ENCODE measurements at regions of chr12 and their contacts with region 1.

Region 1: DNA sequence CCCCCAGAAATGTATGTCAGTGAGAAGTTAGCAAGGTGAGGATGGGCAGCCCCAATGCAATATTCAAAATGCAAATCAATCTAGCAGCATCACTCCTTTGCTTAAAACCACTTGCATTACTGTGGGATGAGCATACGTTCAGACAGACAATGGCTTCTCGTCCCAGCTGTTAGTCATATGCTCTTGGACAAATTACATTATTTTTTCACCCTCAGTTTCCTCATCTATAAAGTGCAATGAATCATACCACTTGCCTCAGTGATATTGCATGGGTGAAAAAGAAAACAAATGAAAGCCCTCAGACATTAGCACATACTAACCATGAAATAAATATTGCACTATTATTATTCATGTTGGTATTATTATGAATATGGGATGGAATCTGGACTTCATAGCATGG is 132.3 kb downstream of the C12orf75 start:
- DNase-seq: no peak
- H3K4me3 ChIP-seq: no peak overlapping the region
- H3K27ac ChIP-seq: no peak overlapping the region
- H3K4me1 ChIP-seq: peaks cover 61% of the 10 kb centered on the region
- H3K27me3 ChIP-seq: no peaks in the 10 kb centered on the region
- CTCF ChIP-seq: no peak
- POLR2A ChIP-seq: no peak

Region 2: GRCh38 chr12:105427883-105428282 is 34.9 kb before region 1 on chr12:
- CTCF ChIA-PET with region 1: interaction called, 15 read pairs
- POLR2A ChIA-PET with region 1: interaction called, 4 read pairs
- dilution Hi-C with region 1: no loop called
- intact Hi-C with region 1: no loop called
- DNase-seq: peak; percentile 76
- H3K4me3 ChIP-seq: no peak overlapping the region
- H3K27ac ChIP-seq: peak overlapping the region; percentile 46
- H3K4me1 ChIP-seq: peaks cover 16% of the 10 kb centered on the region
- H3K27me3 ChIP-seq: no peaks in the 10 kb centered on the region
- CTCF ChIP-seq: peak; percentile 27 to 39
- POLR2A ChIP-seq: no peak

Region 3: GRCh38 chr12:105451211-105451610 is 11.6 kb before region 1 on chr12:
- CTCF ChIA-PET with region 1: interaction called, 12 read pairs
- POLR2A ChIA-PET with region 1: no interaction called
- dilution Hi-C with region 1: no loop called
- intact Hi-C with region 1: no loop called
- DNase-seq: no peak
- H3K4me3 ChIP-seq: no peak overlapping the region
- H3K27ac ChIP-seq: no peak overlapping the region
- H3K4me1 ChIP-seq: peaks cover 14% of the 10 kb centered on the region
- H3K27me3 ChIP-seq: no peaks in the 10 kb centered on the region
- CTCF ChIP-seq: no peak
- POLR2A ChIP-seq: no peak

Region 4: GRCh38 chr12:105523164-105524015 is 60.6 kb after region 1 on chr12:
- CTCF ChIA-PET with region 1: no interaction called
- POLR2A ChIA-PET with region 1: interaction called, 11 read pairs
- dilution Hi-C with region 1: no loop called
- intact Hi-C with region 1: no loop called
- DNase-seq: peak; percentile 18
- H3K4me3 ChIP-seq: no peak overlapping the region
- H3K27ac ChIP-seq: no peak overlapping the region
- H3K4me1 ChIP-seq: peaks cover 3% of the 10 kb centered on the region
- H3K27me3 ChIP-seq: no peaks in the 10 kb centered on the region
- CTCF ChIP-seq: no peak
- POLR2A ChIP-seq: no peak

Measured in endothelial cell of umbilical vein (primary cell).